ENCODE measurements at regions of chr12 and their contacts with region 1.

Region 1: GRCh38 chr12:70853326-70853725 is 67.2 kb downstream of the PTPRR start:
- DNase-seq: peak; percentile 16
- ATAC-seq: peak; percentile 67 to 87

Region 2: GRCh38 chr12:70736351-70737133 is 116.8 kb before region 1 on chr12:
- intact Hi-C with region 1: loop called in 1 of 2 experiments (anchors 5 kb)
- DNase-seq: no peak
- ATAC-seq: no peak